AG04449 (cell line): ENCODE measurements at regions of chr4 and their contacts with region 1.

Region 1: GRCh38 chr4:122639181-122639580 is 18.3 kb upstream of the IL21 start:
- DNase-seq: no peak
- H3K4me3 ChIP-seq: no peak overlapping the region
- CTCF ChIP-seq: no peak

Region 2: GRCh38 chr4:122652379-122652778 is 13.2 kb after region 1 on chr4:
- CTCF ChIA-PET with region 1: interaction called, 22 read pairs
- POLR2A ChIA-PET with region 1: no interaction called
- DNase-seq: no peak
- H3K4me3 ChIP-seq: no peak overlapping the region
- CTCF ChIP-seq: peak; percentile 55